ENCODE measurements at regions of chr14 and their contacts with region 1.

Region 1: DNA sequence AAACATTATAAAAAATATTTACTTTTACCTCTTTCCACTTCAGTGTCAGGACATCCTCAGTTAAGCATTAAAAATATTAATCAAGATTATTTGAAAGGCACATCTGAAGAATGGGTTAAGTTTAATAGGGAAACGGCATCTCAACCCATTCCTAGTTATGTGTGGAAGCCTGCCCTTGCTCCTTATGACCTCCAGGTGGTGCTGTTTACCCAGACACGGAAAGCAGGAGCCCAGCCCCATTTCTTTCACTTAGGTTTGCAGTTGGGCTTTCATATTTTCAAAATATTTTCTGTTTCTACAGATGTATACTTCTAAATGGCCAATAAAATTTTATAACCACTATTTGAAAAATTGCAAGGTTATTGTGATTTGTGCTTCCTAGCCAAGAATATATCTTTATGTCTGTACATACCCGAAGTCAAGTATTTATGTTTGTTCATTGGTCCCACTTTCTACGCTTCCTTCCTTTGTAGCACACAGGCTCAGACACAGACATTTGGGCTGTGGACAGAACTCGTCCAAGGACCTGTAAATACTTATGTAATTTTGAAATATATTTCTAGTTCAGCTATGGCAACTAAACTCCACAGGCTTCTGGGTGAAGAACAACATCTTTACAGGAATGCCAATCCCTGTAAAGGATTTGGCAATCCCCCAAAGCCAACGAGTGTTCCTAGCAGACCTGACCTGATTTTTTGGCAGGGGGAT is 247.1 kb downstream of the AKAP6 start:
- DNase-seq: peak; percentile 56
- ATAC-seq: peak; percentile 67
- H3K4me3 ChIP-seq: no peak overlapping the region
- H3K4me3 Mint-ChIP-seq: no peak overlapping the region
- H3K27ac ChIP-seq: no peak overlapping the region
- H3K27ac Mint-ChIP-seq: no peak overlapping the region
- H3K4me1 ChIP-seq: no peaks in the 10 kb centered on the region
- H3K4me1 Mint-ChIP-seq: peaks cover 8% of the 10 kb centered on the region
- H3K27me3 ChIP-seq: no peaks in the 10 kb centered on the region
- H3K27me3 Mint-ChIP-seq: peaks cover 11% of the 10 kb centered on the region
- CTCF ChIP-seq: peak; percentile 96

Region 2: DNA sequence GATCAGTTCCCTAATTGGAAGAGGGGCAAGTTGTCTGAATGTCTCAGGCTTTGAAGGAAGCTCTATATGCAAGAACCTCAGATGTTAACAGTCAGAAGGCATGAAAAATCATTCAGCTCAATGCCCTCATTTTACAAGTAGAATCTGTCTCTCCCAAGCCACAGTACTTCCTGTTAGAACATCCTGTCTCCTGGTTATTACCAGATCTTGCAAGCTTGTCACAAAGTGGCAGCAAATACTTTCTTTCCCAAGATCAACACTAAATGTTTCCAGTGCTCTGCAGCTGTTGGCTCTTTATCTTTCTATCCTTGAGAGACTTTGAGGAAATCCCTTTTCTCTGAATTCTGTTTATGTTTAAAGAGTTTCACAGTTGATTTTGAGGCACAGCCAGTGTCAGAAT is 11.6 kb before region 1 on chr14:
- CTCF ChIA-PET with region 1: interaction called, 11 read pairs
- POLR2A ChIA-PET with region 1: no interaction called
- intact Hi-C with region 1: no loop called
- DNase-seq: no peak
- ATAC-seq: no peak
- H3K4me3 ChIP-seq: no peak overlapping the region
- H3K4me3 Mint-ChIP-seq: no peak overlapping the region
- H3K27ac ChIP-seq: no peak overlapping the region
- H3K27ac Mint-ChIP-seq: no peak overlapping the region
- H3K4me1 ChIP-seq: no peaks in the 10 kb centered on the region
- H3K4me1 Mint-ChIP-seq: peaks cover 4% of the 10 kb centered on the region
- H3K27me3 ChIP-seq: no peaks in the 10 kb centered on the region
- H3K27me3 Mint-ChIP-seq: peaks cover 13% of the 10 kb centered on the region
- CTCF ChIP-seq: no peak

Region 3: DNA sequence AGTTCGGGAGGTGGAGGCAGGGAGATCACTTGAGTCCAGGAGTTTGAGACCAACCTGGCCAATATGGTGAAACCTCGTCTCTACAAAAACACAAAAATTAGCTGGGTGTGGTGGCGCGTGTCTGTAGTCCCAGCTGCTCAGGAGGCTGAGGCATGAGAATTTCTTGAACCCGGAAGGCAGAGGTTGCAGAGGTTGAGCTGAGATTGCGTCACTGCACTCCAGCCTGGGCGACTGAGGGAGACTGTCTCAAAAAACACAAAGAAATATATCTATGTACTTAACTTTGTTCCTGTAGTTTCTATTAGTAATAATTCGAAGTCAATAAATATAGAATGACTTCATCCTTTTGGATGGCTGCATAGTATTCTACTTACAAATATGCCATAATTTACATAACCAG is 10.1 kb after region 1 on chr14:
- CTCF ChIA-PET with region 1: no interaction called
- POLR2A ChIA-PET with region 1: no interaction called
- intact Hi-C with region 1: no loop called
- DNase-seq: no peak
- ATAC-seq: no peak
- H3K4me3 ChIP-seq: no peak overlapping the region
- H3K4me3 Mint-ChIP-seq: no peak overlapping the region
- H3K27ac ChIP-seq: no peak overlapping the region
- H3K27ac Mint-ChIP-seq: no peak overlapping the region
- H3K4me1 ChIP-seq: no peaks in the 10 kb centered on the region
- H3K4me1 Mint-ChIP-seq: no peaks in the 10 kb centered on the region
- H3K27me3 ChIP-seq: no peaks in the 10 kb centered on the region
- H3K27me3 Mint-ChIP-seq: peaks cover 8% of the 10 kb centered on the region
- CTCF ChIP-seq: no peak

Region 4: DNA sequence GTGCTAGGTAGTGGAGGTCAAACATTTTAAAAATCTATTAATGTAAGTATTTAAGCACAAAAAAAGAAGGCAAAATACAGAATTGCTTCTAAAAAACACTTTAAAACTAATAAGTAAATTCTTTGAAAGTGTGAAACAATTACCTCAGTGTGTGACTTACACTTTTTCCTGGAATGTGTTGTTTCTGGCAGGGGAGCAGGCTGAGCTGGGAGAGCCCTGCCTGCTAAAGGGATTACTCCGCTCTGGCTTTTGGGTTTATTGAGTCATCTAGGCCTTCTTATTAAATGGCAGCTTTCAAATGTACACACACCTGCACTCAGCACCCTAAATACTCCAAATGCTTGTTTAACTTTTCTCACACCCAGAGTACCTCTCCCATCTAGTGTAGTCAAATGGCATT is 32.6 kb after region 1 on chr14:
- CTCF ChIA-PET with region 1: no interaction called
- POLR2A ChIA-PET with region 1: no interaction called
- intact Hi-C with region 1: no loop called
- DNase-seq: no peak
- ATAC-seq: no peak
- H3K4me3 ChIP-seq: no peak overlapping the region
- H3K4me3 Mint-ChIP-seq: no peak overlapping the region
- H3K27ac ChIP-seq: no peak overlapping the region
- H3K27ac Mint-ChIP-seq: no peak overlapping the region
- H3K4me1 ChIP-seq: no peaks in the 10 kb centered on the region
- H3K4me1 Mint-ChIP-seq: no peaks in the 10 kb centered on the region
- H3K27me3 ChIP-seq: no peaks in the 10 kb centered on the region
- H3K27me3 Mint-ChIP-seq: no peaks in the 10 kb centered on the region
- CTCF ChIP-seq: no peak

Region 5: GRCh38 chr14:32826404-32827082 is 250.3 kb after region 1 on chr14:
- CTCF ChIA-PET with region 1: no interaction called
- POLR2A ChIA-PET with region 1: no interaction called
- intact Hi-C with region 1: no loop called
- DNase-seq: no peak
- ATAC-seq: no peak
- H3K4me3 ChIP-seq: no peak overlapping the region
- H3K4me3 Mint-ChIP-seq: no peak overlapping the region
- H3K27ac ChIP-seq: no peak overlapping the region
- H3K27ac Mint-ChIP-seq: no peak overlapping the region
- H3K4me1 ChIP-seq: no peaks in the 10 kb centered on the region
- H3K4me1 Mint-ChIP-seq: no peaks in the 10 kb centered on the region
- H3K27me3 ChIP-seq: no peaks in the 10 kb centered on the region
- H3K27me3 Mint-ChIP-seq: no peaks in the 10 kb centered on the region
- CTCF ChIP-seq: no peak

Region 6: DNA sequence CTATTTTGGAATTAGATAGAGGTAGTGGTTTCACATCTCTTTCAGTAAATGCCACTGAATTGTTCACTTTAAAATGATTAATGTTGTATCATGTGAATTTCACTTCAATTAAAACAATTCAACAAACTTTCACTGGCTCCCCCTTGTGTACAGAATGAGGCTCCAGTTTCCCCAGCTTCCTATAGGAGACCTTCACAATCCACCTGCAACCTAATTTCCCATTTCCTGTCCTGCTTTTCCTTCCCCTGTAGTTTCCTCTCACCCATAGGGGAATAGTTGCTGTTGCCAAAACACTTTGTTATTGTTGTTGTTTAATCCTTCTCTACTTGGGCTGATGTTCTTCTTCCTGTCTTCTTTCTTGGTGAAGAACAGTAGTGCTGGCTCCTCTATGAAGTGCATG is 422.2 kb after region 1 on chr14:
- CTCF ChIA-PET with region 1: no interaction called
- POLR2A ChIA-PET with region 1: no interaction called
- intact Hi-C with region 1: no loop called
- DNase-seq: no peak
- ATAC-seq: no peak
- H3K4me3 ChIP-seq: no peak overlapping the region
- H3K4me3 Mint-ChIP-seq: no peak overlapping the region
- H3K27ac ChIP-seq: no peak overlapping the region
- H3K27ac Mint-ChIP-seq: no peak overlapping the region
- H3K4me1 ChIP-seq: no peaks in the 10 kb centered on the region
- H3K4me1 Mint-ChIP-seq: no peaks in the 10 kb centered on the region
- H3K27me3 ChIP-seq: no peaks in the 10 kb centered on the region
- H3K27me3 Mint-ChIP-seq: no peaks in the 10 kb centered on the region
- CTCF ChIP-seq: no peak

Region 7: DNA sequence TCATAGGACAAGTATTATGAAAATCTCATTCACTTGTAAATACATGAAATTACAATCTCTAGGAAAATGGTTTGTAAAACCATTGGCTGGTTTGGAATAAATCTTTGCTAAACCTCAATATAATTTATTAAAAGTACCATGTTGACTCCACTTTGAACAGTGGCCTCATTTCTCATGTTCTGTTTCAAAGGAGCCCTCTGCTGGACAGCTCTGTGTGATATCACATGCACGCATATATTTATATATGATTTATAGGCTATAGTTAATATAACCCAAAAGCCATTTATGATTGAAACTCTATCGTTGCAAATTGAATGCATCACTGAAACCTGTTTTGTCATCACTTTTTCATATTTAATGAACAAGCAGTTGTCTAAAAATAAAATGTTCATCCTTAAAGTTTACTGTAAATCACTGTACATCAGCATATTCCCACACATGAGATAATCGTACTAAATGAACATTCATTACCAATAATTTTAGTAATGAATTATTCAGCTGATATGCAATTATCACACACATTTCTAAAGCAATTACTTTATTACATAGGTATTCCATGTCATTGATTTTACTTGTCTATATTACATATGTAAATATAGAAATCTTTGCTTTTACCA is 856.3 kb after region 1 on chr14:
- CTCF ChIA-PET with region 1: no interaction called
- POLR2A ChIA-PET with region 1: no interaction called
- intact Hi-C with region 1: loop called (anchors 5 kb)
- DNase-seq: no peak
- ATAC-seq: no peak
- H3K4me3 ChIP-seq: no peak overlapping the region
- H3K4me3 Mint-ChIP-seq: no peak overlapping the region
- H3K27ac ChIP-seq: no peak overlapping the region
- H3K27ac Mint-ChIP-seq: no peak overlapping the region
- H3K4me1 ChIP-seq: no peaks in the 10 kb centered on the region
- H3K4me1 Mint-ChIP-seq: no peaks in the 10 kb centered on the region
- H3K27me3 ChIP-seq: no peaks in the 10 kb centered on the region
- H3K27me3 Mint-ChIP-seq: no peaks in the 10 kb centered on the region
- CTCF ChIP-seq: no peak

Region 8: DNA sequence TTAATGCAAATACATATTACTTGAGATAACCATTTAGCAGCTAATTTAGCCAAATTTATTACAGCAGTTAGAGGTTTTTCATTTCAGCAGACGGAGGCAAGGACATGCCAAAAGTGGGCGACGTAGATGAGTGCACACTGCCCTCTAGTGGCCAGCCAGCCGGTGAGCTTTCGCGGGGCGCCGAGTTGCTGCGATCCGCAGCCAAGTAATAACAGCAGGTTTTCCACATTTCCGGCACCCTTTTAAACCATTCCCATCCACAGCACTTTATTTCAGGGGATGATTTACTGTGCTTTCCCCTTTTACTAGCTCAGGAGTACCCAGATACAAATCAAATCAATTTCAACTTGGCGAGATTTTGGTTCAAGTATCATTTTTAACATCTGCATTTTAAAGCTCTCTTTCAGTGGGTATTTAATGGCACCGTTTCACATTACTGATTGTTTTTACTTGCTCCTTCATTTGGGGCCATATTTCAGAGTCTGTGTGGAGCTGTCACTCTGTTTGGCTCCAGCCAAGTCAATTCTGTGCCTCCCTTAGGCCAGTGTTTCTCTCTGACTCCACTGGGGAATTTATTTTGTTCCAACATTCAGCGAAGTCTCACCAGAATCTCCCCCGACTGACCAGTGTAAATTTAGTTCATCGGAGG is 1216.6 kb after region 1 on chr14:
- CTCF ChIA-PET with region 1: interaction called, 16 read pairs
- POLR2A ChIA-PET with region 1: no interaction called
- intact Hi-C with region 1: no loop called
- DNase-seq: peak; percentile 53
- ATAC-seq: no peak
- H3K4me3 ChIP-seq: no peak overlapping the region
- H3K4me3 Mint-ChIP-seq: peak overlapping the region; percentile 21
- H3K27ac ChIP-seq: no peak overlapping the region
- H3K27ac Mint-ChIP-seq: no peak overlapping the region
- H3K4me1 ChIP-seq: peaks cover 4 to 8% of the 10 kb centered on the region in 2 donors
- H3K4me1 Mint-ChIP-seq: peaks cover 6% of the 10 kb centered on the region
- H3K27me3 ChIP-seq: peaks cover 0 to 20% (median 6%) of the 10 kb centered on the region in 4 experiments
- H3K27me3 Mint-ChIP-seq: peaks cover 36% of the 10 kb centered on the region
- CTCF ChIP-seq: peak; percentile 79

Region 9: DNA sequence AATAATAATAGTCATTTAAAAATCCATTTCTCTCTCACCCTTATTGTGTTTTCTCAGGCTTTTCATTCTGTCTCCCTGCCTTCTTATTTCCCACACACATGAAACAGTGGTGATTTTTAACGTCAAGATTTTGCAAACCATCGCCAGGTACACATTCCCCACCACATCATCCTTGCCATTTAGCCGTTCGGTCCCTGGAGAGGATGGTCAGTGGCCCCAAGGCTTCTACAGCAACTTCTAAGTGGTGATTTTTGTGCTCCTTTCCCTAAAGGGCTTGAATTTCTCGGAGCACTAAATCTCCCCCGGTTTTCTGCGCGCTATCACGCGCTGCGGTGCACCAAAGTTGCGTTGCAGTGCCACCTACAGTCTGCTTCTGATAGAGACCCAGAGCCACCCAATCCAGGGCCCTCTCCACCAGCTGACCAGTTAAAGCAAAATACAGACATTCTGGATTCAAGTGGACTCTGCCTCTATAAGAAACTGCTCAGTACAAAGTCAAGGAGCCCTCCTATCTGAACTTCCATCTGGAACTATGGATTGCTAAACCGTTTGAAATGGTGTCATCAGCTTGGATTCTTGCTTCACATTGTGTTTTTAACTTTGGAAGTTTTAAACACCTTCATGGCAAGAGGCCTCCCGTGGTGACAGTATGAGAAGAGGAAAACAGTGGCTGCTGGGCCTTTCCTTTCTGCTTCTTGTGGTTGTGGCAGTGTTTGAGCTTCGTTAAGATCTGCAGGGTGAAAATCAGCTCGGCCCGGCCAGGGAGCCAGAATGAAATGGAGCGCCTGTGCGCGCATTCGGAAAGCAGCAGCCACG is 1651.8 kb after region 1 on chr14:
- CTCF ChIA-PET with region 1: no interaction called
- POLR2A ChIA-PET with region 1: no interaction called
- intact Hi-C with region 1: loop called (anchors 5 kb)
- DNase-seq: peak; percentile 16
- ATAC-seq: no peak
- H3K4me3 ChIP-seq: no peak overlapping the region
- H3K4me3 Mint-ChIP-seq: no peak overlapping the region
- H3K27ac ChIP-seq: no peak overlapping the region
- H3K27ac Mint-ChIP-seq: no peak overlapping the region
- H3K4me1 ChIP-seq: no peaks in the 10 kb centered on the region
- H3K4me1 Mint-ChIP-seq: no peaks in the 10 kb centered on the region
- H3K27me3 ChIP-seq: peaks cover 0 to 4% (median 2%) of the 10 kb centered on the region in 4 experiments
- H3K27me3 Mint-ChIP-seq: peaks cover 4% of the 10 kb centered on the region
- CTCF ChIP-seq: peak; percentile 46